AG04449 (cell line): ENCODE measurements at regions of chr1 and their contacts with region 1.

Region 1: DNA sequence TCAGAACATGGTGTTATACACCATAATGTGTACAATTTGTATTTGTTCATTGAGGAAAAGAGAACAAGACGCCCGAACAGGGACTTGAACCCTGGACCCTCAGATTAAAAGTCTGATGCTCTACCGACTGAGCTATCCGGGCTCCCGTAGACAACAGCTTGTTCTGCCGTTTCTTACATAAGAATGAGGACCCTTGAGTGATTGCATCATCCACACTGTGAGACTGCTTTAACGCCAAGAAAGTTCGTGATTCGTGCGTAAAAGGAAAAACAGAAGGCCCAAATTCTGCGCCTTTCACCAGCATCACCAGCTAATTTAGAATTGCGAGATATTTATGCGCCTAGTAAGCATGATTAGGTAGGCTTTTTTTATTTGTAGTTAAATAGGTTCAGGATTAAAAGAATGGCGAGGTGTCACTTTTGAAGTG is 9.2 kb upstream of the MDM4 start:
- DNase-seq: peak; percentile 79
- H3K4me3 ChIP-seq: peak overlapping the region; percentile 55
- CTCF ChIP-seq: no peak

Region 2: DNA sequence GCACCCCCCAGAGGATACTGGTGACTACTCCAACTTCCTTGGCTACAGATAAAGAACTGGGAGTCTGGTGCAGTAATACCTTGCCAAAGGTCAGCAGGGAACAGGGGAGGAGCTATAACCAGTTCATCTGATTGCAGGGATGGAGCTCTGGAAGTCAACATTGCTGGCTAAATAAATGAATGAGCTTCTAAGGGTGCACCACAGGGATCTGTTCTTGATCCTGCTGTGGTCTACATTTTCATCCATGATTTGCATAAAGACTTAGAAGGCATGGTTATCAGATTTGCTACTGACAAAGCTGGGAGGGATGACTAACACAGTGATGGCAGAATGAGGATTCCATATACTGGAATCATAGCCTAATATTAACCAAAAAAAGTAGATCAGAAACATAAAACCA is 165.6 kb before region 1 on chr1:
- CTCF ChIA-PET with region 1: no interaction called
- POLR2A ChIA-PET with region 1: no interaction called
- DNase-seq: peak; percentile 33
- H3K4me3 ChIP-seq: no peak overlapping the region
- CTCF ChIP-seq: no peak

Region 3: GRCh38 chr1:204411451-204412204 is 95.3 kb before region 1 on chr1 and contains the start of gene PPP1R15B:
- CTCF ChIA-PET with region 1: interaction called, 11 read pairs
- POLR2A ChIA-PET with region 1: no interaction called
- DNase-seq: peak; percentile 93
- H3K4me3 ChIP-seq: peak within 1 kb of the TSS; percentile 73
- CTCF ChIP-seq: no peak

Region 4: DNA sequence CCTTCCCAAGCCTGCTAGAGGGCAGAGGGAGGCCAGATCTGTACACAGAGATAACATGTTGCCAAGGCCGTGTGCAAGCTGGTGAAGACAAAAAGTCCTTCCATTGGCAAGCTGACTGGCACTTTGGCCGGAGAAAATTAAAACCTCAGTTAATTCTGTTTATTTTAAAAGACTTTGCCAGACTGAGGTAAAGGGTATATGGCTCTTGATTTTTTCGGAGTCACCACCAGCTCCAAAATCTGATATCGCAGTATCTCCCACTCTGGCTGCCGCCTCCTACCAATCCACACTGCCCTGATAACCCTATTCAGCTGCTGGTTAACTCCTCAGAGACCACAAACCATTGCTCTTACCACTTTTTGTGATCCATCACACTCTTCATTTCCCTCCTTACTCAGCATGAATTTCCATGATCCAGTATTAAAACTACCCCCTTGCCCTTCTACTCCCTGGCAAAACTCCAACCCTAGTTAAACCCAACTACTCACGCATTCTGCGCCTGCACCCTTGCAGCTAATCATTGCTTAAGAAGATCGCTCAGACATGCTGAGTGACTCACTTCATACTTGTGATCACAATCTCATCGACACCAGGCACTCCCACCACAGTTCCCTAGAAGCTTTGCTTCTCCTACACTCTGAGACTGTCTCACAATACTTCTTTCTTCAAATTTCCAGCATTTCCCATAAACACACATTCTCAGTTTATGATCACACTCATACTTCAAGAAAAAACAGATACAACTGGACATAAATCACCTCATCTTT is 89.6 kb before region 1 on chr1:
- CTCF ChIA-PET with region 1: interaction called, 1,052 read pairs
- POLR2A ChIA-PET with region 1: no interaction called
- DNase-seq: peak; percentile 99
- H3K4me3 ChIP-seq: peak overlapping the region; percentile 23
- CTCF ChIP-seq: no peak

Region 5: DNA sequence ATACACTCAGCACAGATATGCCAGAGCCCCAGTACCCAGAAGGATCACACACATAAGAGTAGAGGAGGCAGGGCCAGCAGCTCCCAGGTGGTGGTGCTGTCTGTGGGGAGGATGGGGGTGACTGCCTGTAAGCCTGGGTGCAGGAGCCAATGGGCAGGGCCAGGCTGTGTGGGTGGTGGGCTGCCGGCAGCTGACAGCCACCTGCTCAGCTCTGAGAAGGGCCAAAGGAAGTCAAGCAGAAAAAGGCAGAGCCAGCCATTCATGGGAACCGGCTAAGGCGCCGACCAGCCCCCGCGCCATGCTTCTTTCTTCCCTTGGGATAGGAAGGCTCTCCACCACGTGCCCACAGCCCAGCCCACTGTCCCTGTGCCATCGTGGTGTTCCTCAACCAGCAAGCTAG is 26.5 kb before region 1 on chr1:
- CTCF ChIA-PET with region 1: interaction called, 30 read pairs
- POLR2A ChIA-PET with region 1: no interaction called
- DNase-seq: no peak
- H3K4me3 ChIP-seq: no peak overlapping the region
- CTCF ChIP-seq: no peak

Region 6: DNA sequence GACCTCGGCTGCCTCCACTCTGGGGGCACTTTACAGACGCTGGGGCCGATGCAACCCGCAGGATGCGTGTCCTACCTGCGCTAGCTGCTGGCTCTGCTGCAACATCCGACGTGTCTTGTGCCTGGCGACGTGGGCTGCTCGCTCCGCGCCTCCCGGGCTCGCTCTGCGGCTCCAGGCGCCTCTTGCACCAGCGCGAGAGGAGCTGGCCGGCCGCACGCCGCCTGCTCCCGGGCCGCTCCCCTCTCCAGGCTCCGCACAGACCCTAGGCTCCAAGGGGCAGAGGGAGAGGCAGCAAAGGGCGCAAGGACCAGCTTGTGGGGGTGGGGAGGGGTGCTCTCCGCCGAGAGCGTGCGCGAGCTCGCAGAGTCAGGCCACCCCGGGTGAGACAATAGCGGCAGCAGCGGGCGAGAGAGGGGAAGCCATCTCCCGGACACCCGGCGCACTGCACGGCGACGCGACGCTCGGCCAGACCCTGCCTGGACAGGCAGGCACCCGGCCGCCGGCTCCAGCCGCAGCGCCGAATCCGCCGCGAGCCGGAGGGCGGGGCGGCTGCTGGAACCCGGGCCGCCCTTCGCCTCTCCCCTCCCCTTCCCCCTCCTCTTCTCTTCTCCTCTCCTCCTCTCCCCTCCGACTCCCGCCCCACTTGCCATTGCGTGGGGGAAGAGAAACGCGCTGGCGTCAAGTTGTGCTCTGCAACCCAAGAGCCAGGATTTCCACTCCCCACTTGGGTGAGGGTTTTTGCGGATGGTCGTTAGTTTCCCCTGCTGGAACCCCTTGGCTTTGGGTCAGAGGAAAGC is 12.5 kb before region 1 on chr1 and contains the start of gene PIK3C2B:
- CTCF ChIA-PET with region 1: interaction called, 95 read pairs
- POLR2A ChIA-PET with region 1: interaction called, 7 read pairs
- DNase-seq: no peak
- H3K4me3 ChIP-seq: peak within 1 kb of the TSS; percentile 94
- CTCF ChIP-seq: peak; percentile 73